ENCODE measurements at regions of chr16 and their contacts with region 1.

Region 1: GRCh38 chr16:29112755-29113347 is 128.0 kb downstream of the LAT start:
- DNase-seq: no peak

Region 2: GRCh38 chr16:29256501-29256981 is 143.7 kb after region 1 on chr16:
- intact Hi-C with region 1: loop called (anchors 5 kb)
- DNase-seq: no peak

Measured in cardiac septum (tissue), 1 donor.